HEK293 (cell line): ENCODE measurements at regions of chr20 and their contacts with region 1.

Region 1: DNA sequence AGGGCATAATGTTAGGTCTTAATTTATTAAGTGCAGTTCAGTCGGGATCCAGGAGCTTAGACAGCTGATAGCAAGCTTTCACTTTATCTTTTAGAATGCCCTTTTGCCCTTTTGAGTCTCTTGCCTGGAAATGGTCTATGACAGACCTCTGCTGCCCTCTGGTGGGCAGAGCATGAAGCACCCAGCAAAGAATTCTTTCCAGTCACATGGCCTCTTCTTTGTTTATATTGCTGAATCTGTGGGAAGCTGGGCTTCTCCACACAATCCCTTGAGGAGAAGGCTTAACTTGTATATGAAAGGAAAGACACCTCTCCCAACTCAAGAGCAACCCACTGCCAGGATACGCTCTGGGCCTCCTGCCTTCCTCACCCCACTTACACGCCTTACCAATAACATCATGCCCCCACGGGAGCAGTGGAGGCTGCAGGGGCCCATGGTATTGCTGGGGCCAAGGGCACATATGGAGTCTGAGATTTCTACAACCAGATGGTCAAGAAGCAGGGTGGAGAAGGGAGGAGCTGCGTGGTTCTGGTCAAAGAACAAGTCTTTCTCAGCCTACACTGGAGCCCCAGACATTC is 20.4 kb downstream of the WFDC3 start:
- H3K4me3 ChIP-seq: no peak overlapping the region
- H3K27ac ChIP-seq: no peak overlapping the region
- H3K4me1 ChIP-seq: no peaks in the 10 kb centered on the region
- CTCF ChIP-seq: peak; percentile 82

Region 2: DNA sequence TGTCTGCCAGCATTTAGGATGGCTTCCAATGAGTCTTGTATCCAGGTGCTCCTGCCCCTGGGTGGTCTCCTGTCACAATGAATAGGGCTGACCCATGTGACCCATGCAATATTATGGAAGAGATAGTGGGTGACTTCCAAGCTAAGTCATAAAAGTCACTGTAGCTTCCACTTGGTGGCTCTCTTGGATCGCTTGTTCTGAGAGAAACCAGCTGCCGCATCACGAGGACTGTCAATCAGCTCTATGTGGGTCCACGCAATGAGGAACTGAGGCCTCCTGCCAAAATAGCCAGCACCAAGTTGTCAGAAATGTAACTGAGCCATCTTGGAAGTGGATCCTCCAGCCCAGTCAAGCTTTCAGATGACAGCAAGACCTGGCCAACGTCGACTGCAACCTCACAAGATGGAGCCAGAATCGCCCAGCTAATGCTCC is 448.3 kb before region 1 on chr20:
- CTCF ChIA-PET with region 1: interaction called, 53 read pairs
- POLR2A ChIA-PET with region 1: interaction called, 3 read pairs
- H3K4me3 ChIP-seq: no peak overlapping the region
- H3K27ac ChIP-seq: no peak overlapping the region
- H3K4me1 ChIP-seq: no peaks in the 10 kb centered on the region; the same call in 1 of the 2 replicates
- CTCF ChIP-seq: peak; percentile 35; the same call in 1 of the 2 replicates

Region 3: DNA sequence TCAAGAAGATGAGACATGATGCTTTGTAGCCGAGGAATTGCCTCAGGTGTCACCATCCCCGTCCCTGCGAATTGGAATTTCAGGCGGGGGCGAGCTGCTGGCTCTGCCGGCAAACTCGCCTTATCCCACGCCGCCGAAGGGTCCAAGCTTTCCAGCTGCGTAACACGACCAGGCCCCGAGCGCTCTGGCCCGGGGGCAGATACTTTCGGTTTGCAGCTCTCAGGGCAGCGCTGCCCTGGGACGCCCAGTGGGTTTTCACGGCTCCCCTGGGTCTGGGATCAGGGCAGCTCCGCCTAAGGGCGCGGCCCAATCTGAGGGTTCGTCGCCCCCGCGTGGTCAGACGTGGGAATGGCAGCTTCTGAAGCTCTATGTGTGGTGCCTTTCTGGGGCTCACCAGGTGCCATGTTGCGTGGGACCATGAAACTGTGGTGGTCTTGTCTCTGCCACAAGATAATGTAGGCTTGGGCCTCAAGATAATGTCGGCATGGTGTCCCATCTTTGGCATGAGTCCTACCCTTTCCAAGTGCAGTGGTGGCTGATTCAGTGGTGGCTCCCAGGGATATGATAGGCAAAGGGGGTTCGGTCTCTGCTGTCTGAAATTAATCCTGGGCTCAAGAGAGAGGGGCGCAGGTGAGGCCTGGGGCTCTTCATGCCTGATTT is 334.4 kb before region 1 on chr20:
- CTCF ChIA-PET with region 1: interaction called, 16 read pairs
- POLR2A ChIA-PET with region 1: interaction called, 4 read pairs
- H3K4me3 ChIP-seq: peak overlapping the region; percentile 59
- H3K27ac ChIP-seq: no peak overlapping the region
- H3K4me1 ChIP-seq: 0 out of 2 replicates have a peak, but pooled peaks cover 4% of the 10 kb centered on the region
- CTCF ChIP-seq: peak; percentile 97

Region 4: GRCh38 chr20:45484676-45485075 is 286.6 kb before region 1 on chr20:
- CTCF ChIA-PET with region 1: interaction called, 10 read pairs
- POLR2A ChIA-PET with region 1: no interaction called
- H3K4me3 ChIP-seq: no peak overlapping the region
- H3K27ac ChIP-seq: no peak overlapping the region
- H3K4me1 ChIP-seq: no peaks in the 10 kb centered on the region
- CTCF ChIP-seq: no peak

Region 5: DNA sequence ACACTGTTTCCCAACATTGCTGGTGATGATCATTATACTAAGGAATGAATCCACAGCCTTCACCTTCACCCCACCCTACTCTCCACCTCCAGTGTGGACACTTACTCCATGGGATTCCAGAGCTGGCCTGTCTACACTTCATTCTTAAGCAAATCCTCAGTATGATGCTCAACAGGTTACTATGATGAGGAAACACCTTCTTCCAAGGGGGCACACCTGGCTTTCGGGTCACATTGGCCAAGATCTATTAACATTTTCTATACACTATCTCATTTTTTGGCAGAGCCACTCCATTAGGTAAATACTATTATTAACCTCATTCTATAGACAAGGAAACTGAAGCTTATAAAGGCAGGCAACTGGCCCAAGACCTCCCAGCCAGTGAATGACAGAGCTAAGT is 216.1 kb before region 1 on chr20:
- CTCF ChIA-PET with region 1: interaction called, 14 read pairs
- POLR2A ChIA-PET with region 1: no interaction called
- H3K4me3 ChIP-seq: no peak overlapping the region
- H3K27ac ChIP-seq: no peak overlapping the region
- H3K4me1 ChIP-seq: no peaks in the 10 kb centered on the region
- CTCF ChIP-seq: no peak

Region 6: GRCh38 chr20:45629496-45630100 is 141.7 kb before region 1 on chr20 and contains the start of gene WFDC10A:
- CTCF ChIA-PET with region 1: interaction called, 33 read pairs
- POLR2A ChIA-PET with region 1: no interaction called
- H3K4me3 ChIP-seq: no peak within 1 kb of the TSS
- H3K27ac ChIP-seq: no peak within 1 kb of the TSS
- H3K4me1 ChIP-seq: no peaks in the 10 kb centered on the region
- CTCF ChIP-seq: peak; percentile 33; the same call in 1 of the 2 replicates

Region 7: GRCh38 chr20:45752746-45753145 is 18.5 kb before region 1 on chr20:
- CTCF ChIA-PET with region 1: interaction called, 12 read pairs
- POLR2A ChIA-PET with region 1: no interaction called
- H3K4me3 ChIP-seq: no peak overlapping the region
- H3K27ac ChIP-seq: no peak overlapping the region
- H3K4me1 ChIP-seq: no peaks in the 10 kb centered on the region
- CTCF ChIP-seq: no peak

Region 8: DNA sequence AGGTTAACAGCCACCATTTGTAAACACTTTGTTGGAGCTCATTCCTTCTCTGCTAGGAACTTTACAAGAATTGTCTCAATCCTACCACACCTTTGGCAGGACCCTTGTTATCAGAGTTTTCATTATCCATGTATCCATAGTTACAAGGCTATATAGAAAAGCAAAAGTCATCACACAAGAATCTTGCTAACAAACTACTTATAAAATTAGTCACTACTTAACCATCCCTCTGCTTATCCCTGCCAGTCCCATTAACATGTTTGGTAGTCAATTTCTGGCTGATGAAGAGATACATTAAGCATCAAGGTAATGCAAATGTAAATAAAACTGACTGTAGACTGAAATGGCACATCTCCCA is 96.5 kb after region 1 on chr20:
- CTCF ChIA-PET with region 1: no interaction called
- POLR2A ChIA-PET with region 1: no interaction called
- H3K4me3 ChIP-seq: no peak overlapping the region
- H3K27ac ChIP-seq: no peak overlapping the region
- H3K4me1 ChIP-seq: no peaks in the 10 kb centered on the region
- CTCF ChIP-seq: no peak

Region 9: GRCh38 chr20:46199198-46199597 is 427.9 kb after region 1 on chr20:
- CTCF ChIA-PET with region 1: no interaction called
- POLR2A ChIA-PET with region 1: no interaction called
- H3K4me3 ChIP-seq: no peak overlapping the region
- H3K27ac ChIP-seq: no peak overlapping the region
- H3K4me1 ChIP-seq: no peaks in the 10 kb centered on the region
- CTCF ChIP-seq: no peak